WTC11 (cell line): ENCODE measurements at regions of chr9 and their contacts with region 1.

Region 1: GRCh38 chr9:134738869-134739659 is 97.5 kb downstream of the COL5A1 start:
- DNase-seq: peak; percentile 83
- ATAC-seq: peak; percentile 88
- H3K4me3 Mint-ChIP-seq: no peak overlapping the region
- H3K27ac Mint-ChIP-seq: peak overlapping the region; percentile 58
- H3K4me1 Mint-ChIP-seq: peaks cover 7% of the 10 kb centered on the region
- H3K27me3 Mint-ChIP-seq: no peaks in the 10 kb centered on the region
- CTCF ChIP-seq: peak; percentile 86

Region 2: DNA sequence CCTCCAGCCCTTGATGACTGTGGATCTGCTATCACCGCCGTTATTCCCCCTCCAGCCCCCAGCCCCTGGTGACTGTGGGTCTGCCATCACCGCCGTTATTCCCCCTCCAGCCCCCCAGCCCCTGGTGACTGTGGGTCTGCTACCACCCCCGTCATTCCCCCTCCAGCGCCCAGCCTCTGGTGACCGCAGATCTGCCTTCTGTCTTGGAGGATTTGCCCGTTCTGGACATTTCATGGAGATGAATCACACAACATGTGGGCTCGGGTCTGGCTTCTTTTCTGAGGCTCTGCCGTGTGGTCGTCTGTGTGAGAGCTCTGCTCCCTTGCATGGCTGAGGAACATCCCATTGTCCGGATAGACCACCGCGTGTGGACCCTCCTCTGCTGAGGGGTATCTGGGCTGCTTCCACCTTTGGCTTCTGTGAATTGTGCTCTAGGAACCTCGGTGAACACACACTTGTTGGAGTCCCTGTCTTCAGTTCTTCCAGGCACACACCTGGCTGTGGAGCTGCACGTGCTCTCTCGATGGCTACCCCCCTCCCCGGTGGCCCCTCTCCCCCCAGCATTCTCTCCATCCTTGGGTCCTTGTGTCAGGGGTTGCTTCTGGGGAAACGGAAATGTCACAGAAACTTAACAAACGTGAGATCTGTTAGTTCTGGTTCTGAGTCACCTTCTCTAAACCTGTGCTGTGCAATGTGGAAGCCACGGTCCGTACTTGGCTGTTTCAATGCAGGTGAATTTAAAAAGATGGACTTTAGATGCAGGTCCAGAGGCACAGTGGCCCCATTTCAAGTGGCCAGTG is 202.8 kb before region 1 on chr9:
- CTCF ChIA-PET with region 1: no interaction called
- POLR2A ChIA-PET with region 1: no interaction called
- DNase-seq: no peak
- ATAC-seq: no peak
- H3K4me3 Mint-ChIP-seq: no peak overlapping the region
- H3K27ac Mint-ChIP-seq: no peak overlapping the region
- H3K4me1 Mint-ChIP-seq: no peaks in the 10 kb centered on the region
- H3K27me3 Mint-ChIP-seq: no peaks in the 10 kb centered on the region; the same call in 1 of the 2 replicates
- CTCF ChIP-seq: no peak

Region 3: GRCh38 chr9:134698587-134699342 is 40.3 kb before region 1 on chr9:
- CTCF ChIA-PET with region 1: interaction called, 33 read pairs
- POLR2A ChIA-PET with region 1: no interaction called
- DNase-seq: peak; percentile 94
- ATAC-seq: peak; percentile 96
- H3K4me3 Mint-ChIP-seq: no peak overlapping the region
- H3K27ac Mint-ChIP-seq: no peak overlapping the region
- H3K4me1 Mint-ChIP-seq: 0 out of 2 replicates have a peak, but pooled peaks cover 2% of the 10 kb centered on the region
- H3K27me3 Mint-ChIP-seq: no peaks in the 10 kb centered on the region
- CTCF ChIP-seq: peak; percentile 78

Region 4: GRCh38 chr9:134724202-134724911 is 14.7 kb before region 1 on chr9:
- CTCF ChIA-PET with region 1: interaction called, 10 read pairs
- POLR2A ChIA-PET with region 1: no interaction called
- DNase-seq: no peak
- ATAC-seq: no peak
- H3K4me3 Mint-ChIP-seq: no peak overlapping the region
- H3K27ac Mint-ChIP-seq: no peak overlapping the region
- H3K4me1 Mint-ChIP-seq: peaks cover 3% of the 10 kb centered on the region; the same call in 1 of the 2 replicates
- H3K27me3 Mint-ChIP-seq: no peaks in the 10 kb centered on the region
- CTCF ChIP-seq: no peak